CD4-positive, alpha-beta memory T cell (primary cell): ENCODE measurements at regions of chr17 and their contacts with region 1.

Region 1: DNA sequence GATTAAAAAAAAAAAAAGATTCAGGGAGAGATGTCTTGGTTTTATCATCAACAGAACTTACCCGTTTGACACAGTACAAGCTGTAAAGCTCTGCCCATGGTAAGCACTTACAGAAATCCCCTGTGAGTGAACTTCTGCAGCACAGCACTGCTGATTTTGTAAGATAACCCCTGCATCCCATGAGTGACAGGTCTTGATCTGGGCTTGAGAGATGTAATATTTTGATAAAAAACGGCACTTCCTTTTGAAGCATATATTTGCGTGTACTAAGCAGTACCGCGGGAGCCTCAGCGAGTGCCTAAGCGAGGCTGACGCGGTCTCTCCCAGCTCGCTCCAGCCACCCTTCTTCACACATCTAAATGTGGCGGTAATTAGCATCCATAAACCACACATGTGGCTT is 50.5 kb downstream of the IKZF3 start:
- DNase-seq: peak; percentile 75 to 91 (median 82)
- H3K4me3 ChIP-seq: peak overlapping the region in 1 of 2 donors; percentile 16
- H3K4me3 Mint-ChIP-seq: peak overlapping the region; percentile 69 to 92 (median 77)
- H3K27ac ChIP-seq: peak overlapping the region; percentile 67
- H3K27ac Mint-ChIP-seq: peak overlapping the region; percentile 91 to 98 (median 95)
- H3K4me1 ChIP-seq: peaks cover 74% of the 10 kb centered on the region
- H3K4me1 Mint-ChIP-seq: peaks cover 55 to 69% (median 61%) of the 10 kb centered on the region in 4 donors
- H3K27me3 ChIP-seq: no peaks in the 10 kb centered on the region
- H3K27me3 Mint-ChIP-seq: no peaks in the 10 kb centered on the region

Region 2: DNA sequence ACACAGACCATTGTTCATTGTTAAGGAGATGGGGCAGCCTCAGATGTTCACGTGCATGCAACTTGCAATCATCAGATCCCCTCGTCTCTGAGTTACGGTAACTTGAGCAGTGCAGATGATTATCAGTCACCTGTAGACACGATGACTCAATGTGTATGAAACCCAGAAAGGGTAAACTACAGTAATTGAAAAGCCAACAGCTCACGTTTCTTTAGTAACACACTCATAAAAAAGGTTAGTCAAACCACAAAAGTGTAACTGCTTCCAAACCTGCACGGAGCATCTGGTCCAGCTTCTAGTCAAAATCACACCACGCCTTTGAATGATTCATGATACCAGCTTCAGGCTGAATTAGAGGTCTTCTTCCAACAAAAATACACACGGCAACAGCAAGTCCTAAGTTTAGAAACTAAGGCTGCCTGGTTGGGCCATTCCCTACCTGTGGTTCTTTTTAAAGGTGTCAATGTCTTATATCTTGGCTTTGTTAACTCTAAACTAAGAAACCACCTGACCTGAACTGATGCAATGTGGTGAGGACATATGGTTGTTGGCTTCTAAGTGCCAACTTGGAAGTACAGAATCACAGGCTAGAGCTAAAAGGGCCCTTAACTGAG is 43.5 kb before region 1 on chr17:
- CTCF ChIA-PET with region 1: interaction called, 4 read pairs
- POLR2A ChIA-PET with region 1: interaction called, 50 read pairs
- intact Hi-C with region 1: no loop called
- DNase-seq: peak; percentile 67 to 92 (median 72)
- H3K4me3 ChIP-seq: peak overlapping the region in 1 of 2 donors; percentile 6
- H3K4me3 Mint-ChIP-seq: peak overlapping the region; percentile 33 to 96 (median 66)
- H3K27ac ChIP-seq: peak overlapping the region; percentile 77
- H3K27ac Mint-ChIP-seq: peak overlapping the region; percentile 88 to 98 (median 95)
- H3K4me1 ChIP-seq: peaks cover 100% of the 10 kb centered on the region
- H3K4me1 Mint-ChIP-seq: peaks cover 81 to 100% (median 89%) of the 10 kb centered on the region in 4 donors
- H3K27me3 ChIP-seq: no peaks in the 10 kb centered on the region
- H3K27me3 Mint-ChIP-seq: no peaks in the 10 kb centered on the region

Region 3: DNA sequence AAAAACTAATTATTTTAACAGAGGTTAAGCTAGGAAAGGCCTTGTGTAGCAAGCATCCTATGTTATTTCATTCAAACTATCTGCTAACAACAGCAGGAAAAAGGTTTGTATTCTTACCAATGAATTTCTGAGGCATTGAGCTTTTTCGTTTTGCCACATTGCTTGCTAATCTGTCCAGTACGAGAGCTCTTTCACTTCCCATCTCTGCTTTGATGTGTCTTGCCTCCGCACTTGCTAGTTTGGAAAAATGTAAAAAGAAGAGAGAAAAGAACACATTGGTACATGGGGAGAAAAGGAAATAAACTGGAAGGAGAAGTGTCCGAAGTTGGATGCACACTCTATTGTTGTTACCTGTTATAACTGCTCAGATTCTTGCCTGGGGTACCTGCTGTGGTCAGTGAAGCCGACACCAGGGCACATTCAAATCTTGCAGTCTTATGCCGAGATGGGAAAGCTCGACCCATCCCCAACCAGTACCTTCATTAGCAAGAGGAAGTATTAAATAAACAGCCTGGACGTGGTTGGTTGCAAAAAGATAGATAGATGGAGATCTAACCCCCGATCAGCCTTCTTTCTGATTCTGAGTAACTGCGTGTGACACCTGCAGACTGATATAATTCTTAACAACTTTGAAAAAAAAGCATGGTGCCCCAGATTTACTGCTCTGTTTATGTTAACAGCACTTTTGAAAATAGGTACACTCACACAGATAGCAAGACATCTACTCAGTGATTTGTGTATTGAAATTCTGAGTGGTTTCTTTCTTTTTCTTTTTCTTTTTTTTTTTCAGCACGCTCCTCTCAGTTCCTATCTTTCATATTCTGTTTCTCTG is 35.9 kb before region 1 on chr17:
- CTCF ChIA-PET with region 1: interaction called, 43 read pairs
- POLR2A ChIA-PET with region 1: interaction called, 50 read pairs
- intact Hi-C with region 1: loop called (anchors 2 kb)
- DNase-seq: peak in 4 of 5 donors; percentile 34 to 57 (median 48)
- H3K4me3 ChIP-seq: peak overlapping the region; percentile 64 to 74
- H3K4me3 Mint-ChIP-seq: peak overlapping the region; percentile 93 to 99 (median 96)
- H3K27ac ChIP-seq: peak overlapping the region; percentile 77
- H3K27ac Mint-ChIP-seq: peak overlapping the region; percentile 89 to 98 (median 95)
- H3K4me1 ChIP-seq: peaks cover 84% of the 10 kb centered on the region
- H3K4me1 Mint-ChIP-seq: peaks cover 51 to 88% (median 69%) of the 10 kb centered on the region in 4 donors
- H3K27me3 ChIP-seq: no peaks in the 10 kb centered on the region
- H3K27me3 Mint-ChIP-seq: no peaks in the 10 kb centered on the region

Region 4: GRCh38 chr17:39794249-39794970 is 19.2 kb before region 1 on chr17:
- CTCF ChIA-PET with region 1: interaction called, 8 read pairs
- POLR2A ChIA-PET with region 1: interaction called, 74 read pairs
- intact Hi-C with region 1: no loop called
- DNase-seq: peak; percentile 50 to 67 (median 58)
- H3K4me3 ChIP-seq: no peak overlapping the region
- H3K4me3 Mint-ChIP-seq: peak overlapping the region in 7 of 8 donors; percentile 40 to 82 (median 73)
- H3K27ac ChIP-seq: peak overlapping the region; percentile 54
- H3K27ac Mint-ChIP-seq: peak overlapping the region; percentile 83 to 97 (median 91)
- H3K4me1 ChIP-seq: peaks cover 75% of the 10 kb centered on the region
- H3K4me1 Mint-ChIP-seq: peaks cover 56 to 85% (median 70%) of the 10 kb centered on the region in 4 donors
- H3K27me3 ChIP-seq: no peaks in the 10 kb centered on the region
- H3K27me3 Mint-ChIP-seq: no peaks in the 10 kb centered on the region

Region 5: GRCh38 chr17:39800540-39800939 is 13.1 kb before region 1 on chr17:
- CTCF ChIA-PET with region 1: interaction called, 8 read pairs
- POLR2A ChIA-PET with region 1: interaction called, 74 read pairs
- intact Hi-C with region 1: loop called (anchors 1 kb)
- DNase-seq: peak; percentile 67 to 83 (median 71)
- H3K4me3 ChIP-seq: peak overlapping the region in 1 of 2 donors; percentile 12
- H3K4me3 Mint-ChIP-seq: peak overlapping the region in 7 of 8 donors; percentile 13 to 81 (median 63)
- H3K27ac ChIP-seq: peak overlapping the region; percentile 50
- H3K27ac Mint-ChIP-seq: peak overlapping the region; percentile 79 to 96 (median 91)
- H3K4me1 ChIP-seq: peaks cover 43% of the 10 kb centered on the region
- H3K4me1 Mint-ChIP-seq: peaks cover 42 to 63% (median 52%) of the 10 kb centered on the region in 4 donors
- H3K27me3 ChIP-seq: no peaks in the 10 kb centered on the region
- H3K27me3 Mint-ChIP-seq: no peaks in the 10 kb centered on the region

Region 6: DNA sequence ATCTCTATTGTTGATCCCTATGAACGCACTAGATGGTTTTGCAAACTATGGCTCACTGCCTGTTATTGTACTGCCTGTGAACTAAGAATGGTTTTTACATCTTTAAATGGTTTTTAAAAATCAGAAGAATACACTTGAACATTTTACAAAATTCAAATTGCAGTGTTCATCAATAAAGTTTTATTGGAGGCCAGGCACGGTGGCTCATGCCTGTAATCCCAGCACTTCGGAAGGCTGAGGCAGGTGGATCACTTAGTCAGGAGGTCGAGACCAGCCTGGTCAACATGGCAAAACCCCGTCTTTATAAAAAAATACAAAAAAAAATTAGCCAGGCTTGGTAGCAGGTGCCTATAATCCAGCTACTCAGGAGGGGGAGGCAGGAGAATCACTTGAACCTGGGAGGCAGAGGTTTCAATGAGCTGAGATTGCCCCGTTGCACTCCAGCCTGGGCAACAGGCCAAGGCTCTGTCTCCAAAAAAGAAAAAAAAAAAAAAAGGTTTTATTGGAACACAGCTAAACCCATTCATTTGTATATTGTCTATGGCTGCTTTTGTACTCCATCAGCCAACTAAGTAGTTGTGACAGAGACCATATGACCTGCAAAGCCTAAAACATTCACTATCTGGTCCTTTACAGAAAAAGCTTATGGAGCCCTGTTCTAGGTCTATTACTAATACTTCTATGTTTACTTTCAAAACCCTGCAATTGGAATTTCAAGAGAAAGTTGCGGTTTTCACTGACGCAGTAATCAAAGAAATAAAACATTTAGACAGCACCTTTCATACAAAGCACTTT is 31.6 kb after region 1 on chr17:
- CTCF ChIA-PET with region 1: no interaction called
- POLR2A ChIA-PET with region 1: no interaction called
- intact Hi-C with region 1: no loop called
- DNase-seq: no peak
- H3K4me3 ChIP-seq: no peak overlapping the region
- H3K4me3 Mint-ChIP-seq: peak overlapping the region in 3 of 8 donors; percentile 8 to 54 (median 20)
- H3K27ac ChIP-seq: no peak overlapping the region
- H3K27ac Mint-ChIP-seq: peak overlapping the region in 5 of 7 donors; percentile 7 to 70 (median 32)
- H3K4me1 ChIP-seq: peaks cover 71% of the 10 kb centered on the region
- H3K4me1 Mint-ChIP-seq: peaks cover 47 to 78% (median 60%) of the 10 kb centered on the region in 4 donors
- H3K27me3 ChIP-seq: no peaks in the 10 kb centered on the region
- H3K27me3 Mint-ChIP-seq: no peaks in the 10 kb centered on the region